K562 (cell line): ENCODE measurements at regions of chr22 and their contacts with region 1.

Region 1: DNA sequence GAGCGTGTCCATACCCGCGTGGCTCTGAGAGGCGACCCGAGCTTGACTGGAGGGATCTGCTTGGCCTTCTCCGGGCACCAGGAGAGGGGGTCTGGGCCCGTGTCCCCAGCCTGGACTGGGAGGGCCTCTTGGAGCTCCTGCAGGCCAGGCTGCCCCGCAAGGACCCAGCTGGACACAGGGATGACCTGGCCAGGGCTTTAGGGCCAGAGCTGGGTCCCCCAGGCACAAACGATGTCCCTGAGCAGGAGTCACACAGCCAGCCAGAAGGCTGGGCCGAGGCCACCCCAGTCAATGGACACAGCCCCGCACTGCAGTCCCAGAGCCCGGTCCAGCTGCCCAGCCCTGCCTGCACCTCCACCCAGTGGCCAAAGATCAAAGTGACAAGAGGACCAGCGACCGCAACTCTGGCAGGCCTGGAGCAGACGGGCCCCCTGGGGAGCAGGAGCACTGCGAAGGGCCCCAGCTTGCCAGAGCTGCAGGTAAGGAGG is 38.2 kb downstream of the TRIOBP start:
- DNase-seq: peak; percentile 65 to 78 (median 72)
- ATAC-seq: peak; percentile 95
- H3K4me3 ChIP-seq: no peak overlapping the region
- H3K27ac ChIP-seq: no peak overlapping the region
- H3K4me1 ChIP-seq: peaks cover 4 to 25% of the 10 kb centered on the region in 2 experiments; a peak in 4 of 5 replicates
- H3K27me3 ChIP-seq: no peaks in the 10 kb centered on the region
- CTCF ChIP-seq: peak; percentile 61 to 74 (median 65)
- EP300 ChIP-seq: no peak
- POLR2A ChIP-seq: no peak
- RAD21 ChIP-seq: peak; percentile 49 to 64

Region 2: GRCh38 chr22:37777122-37777687 is 42.2 kb after region 1 on chr22:
- CTCF ChIA-PET with region 1: no interaction called
- POLR2A ChIA-PET with region 1: no interaction called
- in situ Hi-C with region 1: no loop called
- intact Hi-C with region 1: no loop called
- DNase-seq: peak in 3 of 4 experiments; percentile 21 to 58 (median 28)
- ATAC-seq: peak; percentile 76
- H3K4me3 ChIP-seq: no peak overlapping the region
- H3K27ac ChIP-seq: no peak overlapping the region
- H3K4me1 ChIP-seq: peaks cover 5 to 7% of the 10 kb centered on the region in 2 experiments; a peak in 3 of 5 replicates
- H3K27me3 ChIP-seq: no peaks in the 10 kb centered on the region
- CTCF ChIP-seq: no peak
- EP300 ChIP-seq: no peak
- POLR2A ChIP-seq: no peak
- RAD21 ChIP-seq: no peak

Region 3: DNA sequence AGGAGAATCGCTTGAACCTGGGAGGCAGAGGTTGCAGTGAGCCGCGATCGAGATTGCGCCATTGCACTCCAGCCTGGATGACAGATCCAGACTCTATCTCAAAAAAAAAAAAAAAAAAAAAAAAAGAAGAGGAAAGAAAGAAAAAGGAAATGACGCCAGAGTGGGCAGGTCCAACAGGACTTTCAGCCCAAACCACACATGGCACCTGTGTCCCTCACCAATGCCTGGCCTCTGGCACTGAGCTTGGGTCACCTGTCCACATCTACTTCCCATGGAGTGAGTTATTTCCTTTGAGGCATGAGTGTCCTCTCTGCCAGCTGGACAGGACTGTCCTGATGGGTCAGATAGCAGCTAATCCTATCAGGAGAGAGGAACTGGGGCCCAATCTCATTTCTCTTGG is 57.5 kb after region 1 on chr22:
- CTCF ChIA-PET with region 1: no interaction called
- POLR2A ChIA-PET with region 1: no interaction called
- in situ Hi-C with region 1: no loop called
- intact Hi-C with region 1: loop called (anchors 5 kb)
- DNase-seq: no peak
- ATAC-seq: no peak
- H3K4me3 ChIP-seq: no peak overlapping the region
- H3K27ac ChIP-seq: no peak overlapping the region
- H3K4me1 ChIP-seq: peaks cover 0 to 3% of the 10 kb centered on the region in 2 experiments; a peak in 1 of 5 replicates
- H3K27me3 ChIP-seq: no peaks in the 10 kb centered on the region
- CTCF ChIP-seq: no peak
- EP300 ChIP-seq: no peak
- POLR2A ChIP-seq: no peak
- RAD21 ChIP-seq: no peak